AG04449 (cell line): ENCODE measurements at regions of chr11 and their contacts with region 1.

Region 1: DNA sequence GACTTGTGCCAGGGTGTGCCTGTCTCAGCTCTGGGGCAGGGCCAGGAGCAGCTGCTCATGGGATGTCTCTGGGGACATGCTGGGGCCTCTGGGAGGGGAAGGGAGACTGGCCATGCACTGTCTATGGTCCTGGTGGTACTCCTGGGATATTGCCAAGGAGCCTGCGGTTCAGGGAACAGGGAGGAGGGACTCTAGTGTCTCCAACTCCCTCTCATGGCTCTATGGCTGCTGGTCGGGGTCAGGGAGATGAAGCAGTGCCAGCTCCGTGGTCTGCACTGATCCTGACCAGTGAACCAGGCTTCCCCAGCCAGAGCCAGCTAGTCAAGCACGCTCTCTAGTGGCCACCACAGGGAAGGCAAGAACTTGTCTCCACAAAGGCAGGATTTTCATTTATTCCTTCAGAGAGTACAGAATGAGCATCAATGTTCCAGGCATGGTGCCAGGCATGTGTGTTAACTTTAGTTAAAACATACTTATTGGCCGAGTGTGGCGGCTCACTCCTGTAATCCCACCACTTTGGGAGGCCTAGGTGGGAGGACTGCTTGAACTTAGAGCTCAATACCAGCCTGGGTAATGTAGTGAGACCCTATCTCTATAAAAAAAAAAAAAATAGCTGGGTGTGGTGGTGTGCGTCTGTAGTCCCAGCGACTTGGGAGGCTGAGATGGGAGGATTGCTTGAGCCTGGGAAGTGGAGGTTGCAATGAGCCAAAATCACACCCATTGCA is 2.5 kb upstream of the BEST1 start:
- DNase-seq: no peak
- H3K4me3 ChIP-seq: no peak overlapping the region
- CTCF ChIP-seq: peak; percentile 94

Region 2: DNA sequence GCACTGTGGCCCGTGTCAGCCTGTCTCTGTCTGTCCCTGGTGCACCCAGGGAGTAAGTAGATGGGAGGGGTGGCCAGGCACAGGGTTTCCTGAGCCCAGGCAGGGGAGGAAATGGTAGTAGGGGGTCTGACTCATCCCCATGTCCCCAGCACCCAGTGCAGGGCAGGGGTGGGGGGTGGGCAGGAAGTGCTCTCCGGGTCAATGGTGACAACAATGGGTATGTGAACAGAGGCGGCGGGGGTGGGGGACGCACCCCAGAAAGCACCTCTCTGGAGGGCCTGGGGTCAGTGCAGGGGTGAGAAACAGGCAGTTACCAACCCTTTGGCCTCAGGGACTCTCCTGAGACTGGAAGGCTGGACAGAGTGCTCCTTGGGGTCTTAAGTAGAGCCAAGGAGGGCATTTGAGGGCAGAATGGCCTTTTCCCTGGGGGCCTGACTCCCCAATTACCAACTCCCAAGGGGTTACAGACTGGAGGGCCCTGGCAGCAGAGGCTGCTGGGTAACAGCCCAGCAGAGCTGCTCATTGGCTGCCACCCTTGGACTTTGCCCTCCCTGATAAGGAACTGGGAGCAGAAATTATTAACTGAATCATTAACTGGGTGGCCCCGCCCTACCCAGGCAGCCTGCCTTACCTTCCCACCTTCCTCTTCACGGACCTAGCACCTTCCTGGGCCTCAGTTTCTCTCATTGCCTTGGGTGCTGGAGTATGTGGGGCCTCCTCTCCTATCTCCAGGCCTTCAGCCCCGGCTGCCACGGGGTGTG is 191.0 kb before region 1 on chr11:
- CTCF ChIA-PET with region 1: no interaction called
- POLR2A ChIA-PET with region 1: no interaction called
- DNase-seq: no peak
- H3K4me3 ChIP-seq: no peak overlapping the region
- CTCF ChIP-seq: no peak

Region 3: DNA sequence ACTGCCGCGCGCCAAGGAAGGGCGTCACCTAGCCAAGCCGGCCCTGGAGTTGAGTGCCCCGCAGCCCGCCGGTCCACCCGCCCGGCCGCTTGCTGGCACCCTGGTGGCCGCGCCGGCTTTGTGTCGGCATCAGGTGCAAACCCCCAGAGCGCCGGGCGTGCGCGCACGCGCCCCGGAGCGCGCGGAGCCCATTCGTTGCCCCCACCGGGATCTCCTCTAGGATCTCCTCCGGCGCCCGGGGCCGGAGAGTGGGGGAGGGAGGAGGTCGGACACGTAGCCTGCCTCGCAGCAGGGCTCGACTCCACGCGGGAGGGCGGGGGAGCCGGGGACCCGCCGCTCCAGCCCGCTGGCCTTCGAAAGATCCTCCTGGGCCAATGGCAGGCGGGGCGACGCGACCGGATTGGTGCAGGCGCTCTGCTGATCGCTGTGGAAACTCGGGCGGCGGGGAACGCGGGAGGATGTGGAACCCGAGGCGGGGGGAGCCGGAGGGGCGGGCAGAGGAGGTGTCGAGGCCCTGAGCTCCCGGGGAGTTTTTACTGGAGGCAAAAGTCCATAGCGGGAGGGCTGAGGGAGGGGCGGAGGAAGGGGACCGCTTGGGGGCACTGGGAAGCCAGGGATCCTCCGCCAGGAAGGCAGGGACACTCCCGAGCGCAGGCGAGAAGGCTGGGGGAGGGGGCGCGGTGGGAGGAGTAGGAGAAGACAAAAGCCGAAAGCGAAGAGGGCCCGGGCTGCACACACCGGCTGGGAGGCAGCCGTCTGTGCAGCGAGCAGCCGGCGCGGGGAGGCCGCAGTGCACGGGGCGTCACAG is 119.9 kb before region 1 on chr11 and contains the start of gene FADS2:
- CTCF ChIA-PET with region 1: interaction called, 11 read pairs
- POLR2A ChIA-PET with region 1: interaction called, 3 read pairs
- DNase-seq: peak; percentile 62
- H3K4me3 ChIP-seq: peak within 1 kb of the TSS; percentile 84
- CTCF ChIP-seq: peak; percentile 23

Region 4: GRCh38 chr11:61891331-61892084 is 56.1 kb before region 1 on chr11 and contains the start of gene FADS3:
- CTCF ChIA-PET with region 1: interaction called, 568 read pairs
- POLR2A ChIA-PET with region 1: no interaction called
- DNase-seq: no peak
- H3K4me3 ChIP-seq: peak within 1 kb of the TSS; percentile 90
- CTCF ChIP-seq: no peak

Region 5: GRCh38 chr11:61917341-61918109 is 30.1 kb before region 1 on chr11 and contains the start of gene RAB3IL1:
- CTCF ChIA-PET with region 1: interaction called, 55 read pairs
- POLR2A ChIA-PET with region 1: interaction called, 3 read pairs
- DNase-seq: no peak
- H3K4me3 ChIP-seq: peak within 1 kb of the TSS; percentile 58
- CTCF ChIP-seq: no peak

Region 6: DNA sequence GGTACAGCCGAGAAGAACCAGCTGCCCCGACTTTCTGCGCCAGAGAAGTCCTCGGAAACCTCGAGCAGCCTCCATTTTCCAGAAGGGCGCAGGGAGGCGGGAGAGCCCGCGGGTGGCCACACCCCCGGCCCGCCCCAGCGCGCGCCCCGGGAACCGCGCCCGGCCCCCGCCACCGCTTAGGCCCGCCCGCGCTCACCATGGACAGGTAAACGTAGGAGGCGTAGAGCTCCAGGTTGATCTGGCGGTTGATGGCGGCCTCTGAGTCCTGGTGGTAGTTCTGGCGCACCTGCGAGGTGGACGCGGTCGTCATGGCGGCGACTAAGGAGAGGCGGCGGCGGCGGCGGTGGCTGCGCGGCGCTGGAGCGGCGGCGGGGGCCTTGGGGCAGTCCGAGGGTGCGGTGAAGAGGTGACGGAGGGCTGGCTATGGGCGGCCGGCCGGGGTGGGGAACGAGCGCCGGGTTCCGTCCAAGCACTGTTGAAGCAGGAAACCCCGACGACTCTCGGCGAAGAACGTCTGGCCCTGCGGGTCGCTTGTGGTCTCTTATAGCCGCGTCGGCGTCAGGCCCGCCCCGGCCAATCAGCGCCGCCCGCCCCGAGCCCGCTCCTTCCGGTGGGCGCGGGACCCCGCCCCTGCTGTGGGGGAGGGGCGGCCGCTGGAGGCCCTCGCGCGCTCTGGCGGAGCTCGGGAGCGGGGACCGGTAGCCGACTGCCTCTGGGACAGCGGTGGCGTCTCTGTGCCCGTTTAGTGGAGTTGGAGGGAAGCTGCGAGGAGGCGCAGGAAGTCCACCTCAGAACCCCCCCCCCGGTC is 19.7 kb after region 1 on chr11 and contains the start of gene FTH1:
- CTCF ChIA-PET with region 1: interaction called, 17 read pairs
- POLR2A ChIA-PET with region 1: interaction called, 44 read pairs
- DNase-seq: no peak
- H3K4me3 ChIP-seq: peak within 1 kb of the TSS; percentile 98
- CTCF ChIP-seq: no peak

Region 7: GRCh38 chr11:62370743-62371440 is 423.2 kb after region 1 on chr11:
- CTCF ChIA-PET with region 1: no interaction called
- POLR2A ChIA-PET with region 1: no interaction called
- DNase-seq: no peak
- H3K4me3 ChIP-seq: no peak overlapping the region
- CTCF ChIP-seq: no peak